ENCODE measurements at regions of chr9 and their contacts with region 1.

Region 1: DNA sequence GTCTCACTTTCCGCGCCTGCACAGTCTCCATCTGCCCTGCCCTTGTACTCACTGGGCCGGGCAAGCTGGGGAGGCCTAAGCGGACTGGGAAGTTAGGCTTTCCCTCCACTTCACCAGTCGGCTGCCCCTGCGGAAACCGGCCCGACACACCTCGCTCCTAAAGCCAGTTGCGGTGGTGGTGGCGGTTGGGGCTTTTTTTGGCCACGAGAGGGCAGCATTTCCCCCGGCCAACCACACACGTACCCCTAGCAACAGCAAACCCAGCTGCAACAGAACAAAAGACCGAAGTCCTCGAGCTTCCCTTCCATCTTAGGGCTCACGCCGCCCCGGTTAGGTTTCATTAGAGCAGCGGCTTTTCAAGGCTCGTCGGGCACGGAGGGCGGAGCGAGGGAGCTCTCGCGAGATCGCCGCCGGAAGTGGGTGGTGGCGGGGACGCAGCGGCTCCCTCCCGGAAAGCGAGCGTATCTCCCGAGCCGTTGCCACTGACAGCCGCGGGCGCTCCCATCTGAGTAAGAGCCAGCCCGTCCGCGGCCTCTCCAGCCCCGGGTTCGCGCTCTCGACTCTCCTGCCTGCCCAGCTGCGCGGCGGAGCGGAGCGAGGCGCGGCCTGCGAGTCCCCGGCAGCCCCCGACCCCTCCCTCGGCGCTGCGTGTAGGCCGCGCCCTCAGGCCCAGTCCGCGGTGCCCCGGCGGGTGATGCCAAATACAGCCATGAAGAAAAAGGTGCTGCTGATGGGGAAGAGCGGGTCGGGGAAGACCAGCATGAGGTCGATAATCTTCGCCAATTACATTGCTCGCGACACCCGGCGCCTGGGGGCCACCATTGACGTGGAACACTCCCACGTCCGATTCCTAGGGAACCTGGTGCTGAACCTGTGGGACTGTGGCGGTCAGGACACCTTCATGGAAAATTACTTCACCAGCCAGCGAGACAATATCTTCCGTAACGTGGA is at the start of gene RRAGA:
- DNase-seq: peak; percentile 94 to 97
- ATAC-seq: peak; percentile 92 to 96 (median 93)
- H3K4me3 ChIP-seq: peak within 1 kb of the TSS; percentile 77
- H3K4me3 Mint-ChIP-seq: peak within 1 kb of the TSS; percentile 94
- H3K27ac ChIP-seq: peak within 1 kb of the TSS; percentile 82
- H3K27ac Mint-ChIP-seq: peak within 1 kb of the TSS; percentile 95 to 96
- H3K4me1 ChIP-seq: peaks cover 20% of the 10 kb centered on the region
- H3K4me1 Mint-ChIP-seq: peaks cover 30 to 33% of the 10 kb centered on the region in 2 donors
- H3K27me3 ChIP-seq: no peaks in the 10 kb centered on the region
- H3K27me3 Mint-ChIP-seq: no peaks in the 10 kb centered on the region
- CTCF ChIP-seq: peak; percentile 69
- total RNA-seq, gene RRAGA: 39.0 to 43.9 (median 41.5) TPM

Region 2: DNA sequence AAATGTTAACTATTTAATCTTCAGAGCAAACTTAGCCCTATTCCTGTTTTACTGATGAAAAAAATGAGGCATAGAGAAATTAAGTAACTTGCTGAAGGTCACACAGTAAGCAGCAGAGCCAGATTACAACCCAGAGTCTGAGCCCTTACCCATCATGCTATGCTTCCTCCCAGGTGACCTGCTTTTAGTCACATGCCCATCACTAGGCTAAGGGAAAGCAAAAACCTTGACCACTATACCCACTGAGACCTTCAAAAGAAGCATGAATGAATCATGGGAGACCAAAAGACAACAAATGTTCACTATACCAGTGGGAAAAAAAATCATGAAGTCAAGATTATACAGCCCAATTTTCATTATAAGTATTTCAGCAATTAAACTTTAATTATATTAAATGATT is 58.8 kb after region 1 on chr9:
- intact Hi-C with region 1: no loop called
- DNase-seq: no peak
- ATAC-seq: no peak
- H3K4me3 ChIP-seq: no peak overlapping the region
- H3K4me3 Mint-ChIP-seq: no peak overlapping the region
- H3K27ac ChIP-seq: no peak overlapping the region
- H3K27ac Mint-ChIP-seq: no peak overlapping the region
- H3K4me1 ChIP-seq: peaks cover 4% of the 10 kb centered on the region
- H3K4me1 Mint-ChIP-seq: peaks cover under 1% of the 10 kb centered on the region in 2 donors
- H3K27me3 ChIP-seq: no peaks in the 10 kb centered on the region
- H3K27me3 Mint-ChIP-seq: no peaks in the 10 kb centered on the region
- CTCF ChIP-seq: no peak

Region 3: GRCh38 chr9:19174127-19174912 is 125.1 kb after region 1 on chr9:
- intact Hi-C with region 1: loop called (anchors 2 kb)
- DNase-seq: peak; percentile 34 to 67
- ATAC-seq: peak; percentile 88 to 95 (median 95)
- H3K4me3 ChIP-seq: no peak overlapping the region
- H3K4me3 Mint-ChIP-seq: peak overlapping the region; percentile 43
- H3K27ac ChIP-seq: no peak overlapping the region
- H3K27ac Mint-ChIP-seq: peak overlapping the region; percentile 60 to 71
- H3K4me1 ChIP-seq: peaks cover 7% of the 10 kb centered on the region
- H3K4me1 Mint-ChIP-seq: peaks cover 11 to 25% of the 10 kb centered on the region in 2 donors
- H3K27me3 ChIP-seq: no peaks in the 10 kb centered on the region
- H3K27me3 Mint-ChIP-seq: no peaks in the 10 kb centered on the region
- CTCF ChIP-seq: peak; percentile 72

Region 4: DNA sequence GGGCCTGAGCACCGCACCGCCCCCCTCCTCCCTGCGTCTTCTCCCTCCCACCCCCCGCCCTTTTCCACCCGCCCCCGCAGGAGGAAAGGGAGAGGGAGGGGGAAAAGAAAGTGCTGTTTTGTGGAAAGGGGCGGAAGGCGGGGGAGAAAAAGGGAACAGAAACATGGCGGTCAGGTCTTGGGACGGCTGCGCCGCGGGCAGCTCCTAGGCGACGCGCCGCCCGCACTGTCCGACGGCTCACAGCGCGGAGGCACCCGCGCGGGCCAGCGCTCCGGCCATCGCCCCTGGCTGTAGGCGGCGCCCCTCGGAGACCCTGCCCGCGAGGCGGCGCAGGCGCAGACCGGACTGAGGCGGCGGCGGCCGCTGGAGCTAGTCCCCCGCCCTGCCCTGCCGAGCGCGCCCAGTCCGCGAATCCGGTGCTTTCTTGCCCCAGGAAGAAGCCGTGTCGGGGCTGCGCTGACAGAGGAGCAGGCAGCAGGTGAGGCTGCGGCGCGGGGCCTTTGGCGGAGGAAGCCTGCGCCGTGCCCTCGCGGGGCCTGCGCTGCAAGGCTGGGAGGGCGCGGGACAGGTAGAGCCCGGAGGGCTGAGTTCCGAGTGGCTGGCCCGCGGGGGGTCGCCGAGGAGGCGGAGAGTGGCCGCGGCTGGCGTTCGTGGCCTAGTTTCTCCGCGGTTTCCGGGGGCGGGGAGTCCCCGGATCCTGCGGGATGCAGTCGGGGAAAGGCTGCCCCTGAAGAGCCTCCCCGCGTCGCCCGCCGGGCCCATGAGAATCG is 181.3 kb after region 1 on chr9 and contains the start of gene DENND4C:
- intact Hi-C with region 1: loop called (anchors 5 kb)
- DNase-seq: peak; percentile 72 to 89
- ATAC-seq: peak; percentile 78 to 89 (median 81)
- H3K4me3 ChIP-seq: peak within 1 kb of the TSS; percentile 49
- H3K4me3 Mint-ChIP-seq: peak within 1 kb of the TSS; percentile 84
- H3K27ac ChIP-seq: peak within 1 kb of the TSS; percentile 65
- H3K27ac Mint-ChIP-seq: no peak within 1 kb of the TSS
- H3K4me1 ChIP-seq: peaks cover 10% of the 10 kb centered on the region
- H3K4me1 Mint-ChIP-seq: peaks cover 8 to 15% of the 10 kb centered on the region in 2 donors
- H3K27me3 ChIP-seq: no peaks in the 10 kb centered on the region
- H3K27me3 Mint-ChIP-seq: no peaks in the 10 kb centered on the region
- CTCF ChIP-seq: no peak
- total RNA-seq, gene DENND4C: 82.6 to 115 (median 100) TPM

Region 5: DNA sequence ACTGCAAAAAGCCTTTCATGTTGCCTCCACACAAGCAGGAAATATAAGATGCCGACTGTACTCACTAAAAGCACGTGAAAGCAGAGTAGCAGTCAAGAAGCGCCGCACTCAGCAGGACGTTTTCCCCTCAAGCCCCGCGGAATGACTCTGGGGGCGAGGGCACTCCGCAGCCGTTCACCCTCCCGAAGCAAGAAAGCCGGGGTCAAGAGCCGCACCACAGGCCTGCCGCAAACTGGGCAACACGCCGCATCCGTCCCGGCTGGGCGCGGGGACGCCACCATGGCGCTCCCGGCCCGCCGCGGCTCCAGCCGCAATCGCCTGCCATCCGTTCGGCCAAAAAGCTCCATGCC is 330.4 kb after region 1 on chr9:
- intact Hi-C with region 1: loop called (anchors 2 kb)
- DNase-seq: peak in 1 of 2 donors; percentile 72
- ATAC-seq: peak; percentile 41 to 58 (median 50)
- H3K4me3 ChIP-seq: peak overlapping the region; percentile 72
- H3K4me3 Mint-ChIP-seq: peak overlapping the region; percentile 96
- H3K27ac ChIP-seq: peak overlapping the region; percentile 88
- H3K27ac Mint-ChIP-seq: peak overlapping the region; percentile 93 to 99
- H3K4me1 ChIP-seq: peaks cover 17% of the 10 kb centered on the region
- H3K4me1 Mint-ChIP-seq: peaks cover 36 to 46% of the 10 kb centered on the region in 2 donors
- H3K27me3 ChIP-seq: no peaks in the 10 kb centered on the region
- H3K27me3 Mint-ChIP-seq: no peaks in the 10 kb centered on the region
- CTCF ChIP-seq: no peak

Measured in natural killer cell (primary cell).